ENCODE measurements at regions of chr3 and their contacts with region 1.

Region 1: DNA sequence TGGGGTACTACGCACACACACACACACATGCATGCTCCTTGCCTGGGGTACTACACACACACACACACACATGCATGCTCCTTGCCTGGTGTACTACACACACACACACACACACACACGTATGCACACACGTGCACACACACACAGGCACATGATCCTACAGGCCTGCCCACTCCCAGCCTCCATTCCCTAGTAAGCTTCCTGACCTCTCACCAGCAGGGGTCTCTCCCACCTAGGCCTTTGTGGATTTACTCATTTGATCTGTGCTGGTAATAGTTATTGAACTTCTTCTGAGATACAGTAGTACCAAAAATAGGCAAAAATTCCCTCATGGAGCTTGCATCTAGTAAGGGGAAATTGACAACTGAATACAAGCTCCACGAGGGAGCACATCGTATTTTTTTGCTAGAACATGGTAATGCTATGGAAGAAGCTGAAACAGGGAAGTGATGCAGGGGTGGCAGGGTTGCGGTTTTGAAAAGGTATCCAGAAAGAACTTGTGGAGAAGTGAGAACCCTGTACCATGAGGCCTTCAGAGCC is 19.1 kb downstream of the TTC21A start:
- DNase-seq: peak; percentile 47
- ATAC-seq: peak; percentile 70 to 75

Region 2: GRCh38 chr3:38317155-38317759 is 809.3 kb before region 1 on chr3:
- intact Hi-C with region 1: no loop called
- DNase-seq: no peak
- ATAC-seq: no peak

Region 3: GRCh38 chr3:38985581-38985980 is 141.0 kb before region 1 on chr3:
- intact Hi-C with region 1: no loop called
- DNase-seq: no peak
- ATAC-seq: no peak

Region 4: GRCh38 chr3:39295184-39295775 is 168.7 kb after region 1 on chr3:
- intact Hi-C with region 1: loop called in 1 of 2 experiments (anchors 2 kb)
- DNase-seq: no peak
- ATAC-seq: no peak

Measured in left cardiac atrium (tissue), 4 donors.